GM13977 (cell line): ENCODE measurements at regions of chr1 and their contacts with region 1.

Region 1: GRCh38 chr1:201792534-201793305 is 36.2 kb upstream of the IPO9 start:
- DNase-seq: peak; percentile 82
- CTCF ChIP-seq: peak; percentile 95

Region 2: DNA sequence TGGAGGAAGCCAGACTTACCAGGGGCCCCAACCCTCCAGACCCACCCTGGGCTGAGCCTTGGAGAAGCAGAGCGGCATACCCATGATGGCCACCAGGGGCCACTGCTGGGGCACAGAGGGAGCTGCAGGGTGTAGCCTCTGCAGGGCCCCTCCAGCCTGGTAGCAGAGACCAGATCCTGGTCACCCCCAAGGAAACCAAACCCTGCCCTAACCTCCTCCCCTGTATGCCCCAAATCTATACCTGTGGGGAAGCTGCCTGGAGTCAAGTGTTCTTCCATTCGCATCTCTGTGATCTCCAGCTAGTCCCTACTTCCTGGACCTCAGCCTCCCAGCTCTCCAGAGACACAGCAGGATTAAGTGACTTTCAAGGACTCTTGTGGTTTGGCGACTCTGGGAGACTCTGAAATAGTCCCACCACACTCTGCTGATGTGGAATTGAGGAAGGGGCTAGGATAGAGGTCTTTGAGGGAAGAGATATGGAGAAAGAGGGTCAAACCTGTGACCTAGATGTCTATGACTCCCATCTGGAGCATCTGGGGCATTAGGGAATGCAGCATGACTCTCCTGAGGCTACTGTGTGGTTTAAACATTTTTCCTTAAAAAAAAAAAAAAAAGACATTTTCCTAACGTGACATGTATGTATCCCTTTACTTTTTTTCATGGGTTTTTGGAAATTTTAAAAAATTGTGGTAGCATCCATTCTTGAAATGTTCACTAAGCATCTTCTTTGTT is 83.0 kb before region 1 on chr1:
- in situ Hi-C with region 1: loop called (anchors 5 kb)
- DNase-seq: peak; percentile 80
- CTCF ChIP-seq: peak; percentile 91